ENCODE measurements at regions of chr2 and their contacts with region 1.

Region 1: GRCh38 chr2:144332356-144333142 is 187.4 kb downstream of the ZEB2 start:
- DNase-seq: peak in 8 of 9 experiments; percentile 71 to 95 (median 86)
- ATAC-seq: peak; percentile 88
- H3K4me3 ChIP-seq: peak overlapping the region; percentile 65 to 76
- H3K4me3 Mint-ChIP-seq: peak overlapping the region; percentile 95
- H3K27ac ChIP-seq: peak overlapping the region; percentile 49 to 76
- H3K27ac Mint-ChIP-seq: peak overlapping the region; percentile 95
- H3K4me1 ChIP-seq: peaks cover 15% of the 10 kb centered on the region
- H3K4me1 Mint-ChIP-seq: peaks cover 38% of the 10 kb centered on the region
- H3K27me3 ChIP-seq: no peaks in the 10 kb centered on the region
- H3K27me3 Mint-ChIP-seq: no peaks in the 10 kb centered on the region
- CTCF ChIP-seq: no peak

Region 2: GRCh38 chr2:144183727-144184126 is 148.8 kb before region 1 on chr2:
- CTCF ChIA-PET with region 1: no interaction called
- POLR2A ChIA-PET with region 1: interaction called, 3 read pairs
- intact Hi-C with region 1: loop called in 1 of 2 experiments (anchors 5 kb)
- DNase-seq: peak; percentile 37 to 96 (median 71)
- ATAC-seq: peak; percentile 98
- H3K4me3 ChIP-seq: peak overlapping the region in 1 of 2 experiments; percentile 31
- H3K4me3 Mint-ChIP-seq: peak overlapping the region; percentile 76
- H3K27ac ChIP-seq: peak overlapping the region in 1 of 2 experiments; percentile 38
- H3K27ac Mint-ChIP-seq: peak overlapping the region; percentile 71
- H3K4me1 ChIP-seq: peaks cover 12% of the 10 kb centered on the region
- H3K4me1 Mint-ChIP-seq: peaks cover 30% of the 10 kb centered on the region
- H3K27me3 ChIP-seq: no peaks in the 10 kb centered on the region
- H3K27me3 Mint-ChIP-seq: no peaks in the 10 kb centered on the region
- CTCF ChIP-seq: no peak

Region 3: GRCh38 chr2:144275340-144275739 is 57.2 kb before region 1 on chr2:
- CTCF ChIA-PET with region 1: no interaction called
- POLR2A ChIA-PET with region 1: interaction called, 3 read pairs
- intact Hi-C with region 1: loop called in 1 of 2 experiments (anchors 5 kb)
- DNase-seq: no peak
- ATAC-seq: no peak
- H3K4me3 ChIP-seq: no peak overlapping the region
- H3K4me3 Mint-ChIP-seq: no peak overlapping the region
- H3K27ac ChIP-seq: no peak overlapping the region
- H3K27ac Mint-ChIP-seq: no peak overlapping the region
- H3K4me1 ChIP-seq: no peaks in the 10 kb centered on the region
- H3K4me1 Mint-ChIP-seq: peaks cover 32% of the 10 kb centered on the region
- H3K27me3 ChIP-seq: no peaks in the 10 kb centered on the region
- H3K27me3 Mint-ChIP-seq: no peaks in the 10 kb centered on the region
- CTCF ChIP-seq: no peak

Region 4: DNA sequence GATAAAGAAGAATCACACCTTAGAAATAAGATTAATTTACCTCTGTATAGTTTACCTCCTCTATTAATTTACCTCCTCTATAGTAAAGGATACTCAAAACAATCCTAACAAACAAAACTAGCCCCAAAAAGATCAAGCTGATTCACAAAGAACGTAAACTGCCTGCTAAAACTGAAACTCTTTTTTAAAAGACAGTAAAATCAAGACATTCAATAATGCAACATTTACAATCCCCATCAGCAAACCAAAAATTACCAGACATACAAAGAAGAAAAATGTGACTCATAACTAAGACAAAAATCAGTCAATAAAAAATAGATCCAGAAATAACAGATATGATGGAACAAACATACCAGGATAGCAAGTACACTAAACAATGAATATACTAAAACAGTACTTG is 28.3 kb before region 1 on chr2:
- CTCF ChIA-PET with region 1: no interaction called
- POLR2A ChIA-PET with region 1: no interaction called
- intact Hi-C with region 1: no loop called
- DNase-seq: no peak
- ATAC-seq: no peak
- H3K4me3 ChIP-seq: no peak overlapping the region
- H3K4me3 Mint-ChIP-seq: no peak overlapping the region
- H3K27ac ChIP-seq: no peak overlapping the region
- H3K27ac Mint-ChIP-seq: no peak overlapping the region
- H3K4me1 ChIP-seq: no peaks in the 10 kb centered on the region
- H3K4me1 Mint-ChIP-seq: peaks cover 16% of the 10 kb centered on the region
- H3K27me3 ChIP-seq: no peaks in the 10 kb centered on the region
- H3K27me3 Mint-ChIP-seq: no peaks in the 10 kb centered on the region
- CTCF ChIP-seq: no peak

Region 5: DNA sequence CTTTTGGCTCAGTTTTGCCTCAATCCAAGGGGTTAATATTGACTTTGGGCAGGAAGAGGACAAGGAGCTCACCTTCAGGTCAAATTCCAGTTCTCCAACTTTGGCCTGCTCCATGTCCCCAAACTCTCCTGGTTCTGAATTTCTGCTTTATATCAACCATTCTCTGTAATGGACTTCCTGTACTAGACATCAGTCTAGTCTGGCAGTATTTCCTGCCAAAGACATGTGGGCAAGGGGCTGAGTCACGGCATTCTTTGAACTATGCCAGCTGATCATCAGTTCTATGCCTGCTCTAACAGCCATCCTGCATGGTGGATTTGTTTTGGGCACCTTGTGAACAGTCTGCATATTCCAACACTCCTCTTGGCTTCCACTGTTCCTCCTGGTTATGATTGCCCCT is 12.1 kb before region 1 on chr2:
- CTCF ChIA-PET with region 1: interaction called, 4 read pairs
- POLR2A ChIA-PET with region 1: interaction called, 10 read pairs
- intact Hi-C with region 1: loop called in 1 of 2 experiments (anchors 1 kb)
- DNase-seq: peak in 8 of 9 experiments; percentile 41 to 87 (median 72)
- ATAC-seq: peak; percentile 53
- H3K4me3 ChIP-seq: no peak overlapping the region
- H3K4me3 Mint-ChIP-seq: peak overlapping the region; percentile 27
- H3K27ac ChIP-seq: peak overlapping the region in 1 of 2 experiments; percentile 64
- H3K27ac Mint-ChIP-seq: peak overlapping the region; percentile 86
- H3K4me1 ChIP-seq: peaks cover 29% of the 10 kb centered on the region
- H3K4me1 Mint-ChIP-seq: peaks cover 55% of the 10 kb centered on the region
- H3K27me3 ChIP-seq: no peaks in the 10 kb centered on the region
- H3K27me3 Mint-ChIP-seq: no peaks in the 10 kb centered on the region
- CTCF ChIP-seq: no peak

Region 6: GRCh38 chr2:144382849-144383248 is 50.3 kb after region 1 on chr2:
- CTCF ChIA-PET with region 1: no interaction called
- POLR2A ChIA-PET with region 1: no interaction called
- intact Hi-C with region 1: loop called (anchors 2 to 5 kb)
- DNase-seq: peak in 4 of 9 experiments; percentile 26 to 89 (median 62)
- ATAC-seq: peak; percentile 93
- H3K4me3 ChIP-seq: no peak overlapping the region
- H3K4me3 Mint-ChIP-seq: peak overlapping the region; percentile 3
- H3K27ac ChIP-seq: no peak overlapping the region
- H3K27ac Mint-ChIP-seq: peak overlapping the region; percentile 15
- H3K4me1 ChIP-seq: peaks cover 20% of the 10 kb centered on the region
- H3K4me1 Mint-ChIP-seq: peaks cover 29% of the 10 kb centered on the region
- H3K27me3 ChIP-seq: no peaks in the 10 kb centered on the region
- H3K27me3 Mint-ChIP-seq: no peaks in the 10 kb centered on the region
- CTCF ChIP-seq: no peak

Region 7: DNA sequence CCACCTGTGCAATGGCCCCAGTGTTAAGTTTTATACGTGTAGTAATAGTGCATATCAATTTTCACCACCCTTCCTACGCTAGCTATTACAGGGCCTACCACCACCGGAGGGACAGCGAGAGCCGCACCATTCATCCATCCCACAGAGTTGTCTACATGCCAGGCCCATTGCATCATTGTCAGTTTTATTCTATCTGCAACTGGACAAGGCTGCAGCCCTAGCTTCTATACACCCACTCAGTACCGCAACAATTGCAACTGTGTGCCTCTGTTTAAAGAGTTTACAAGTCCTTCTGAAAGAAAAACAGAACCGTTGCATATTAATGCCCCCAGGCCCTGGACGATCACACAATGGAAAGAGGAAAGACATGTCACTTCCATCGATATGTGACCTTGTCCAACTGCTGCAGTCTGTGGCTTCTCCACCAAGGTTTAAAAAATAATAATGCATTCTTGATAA is 128.8 kb after region 1 on chr2:
- CTCF ChIA-PET with region 1: no interaction called
- POLR2A ChIA-PET with region 1: no interaction called
- intact Hi-C with region 1: loop called in 1 of 2 experiments (anchors 5 kb)
- DNase-seq: no peak
- ATAC-seq: no peak
- H3K4me3 ChIP-seq: no peak overlapping the region
- H3K4me3 Mint-ChIP-seq: no peak overlapping the region
- H3K27ac ChIP-seq: peak overlapping the region; percentile 56 to 98
- H3K27ac Mint-ChIP-seq: no peak overlapping the region
- H3K4me1 ChIP-seq: no peaks in the 10 kb centered on the region
- H3K4me1 Mint-ChIP-seq: peaks cover 12% of the 10 kb centered on the region
- H3K27me3 ChIP-seq: no peaks in the 10 kb centered on the region
- H3K27me3 Mint-ChIP-seq: no peaks in the 10 kb centered on the region
- CTCF ChIP-seq: no peak

Region 8: GRCh38 chr2:144516981-144517865 is 184.7 kb after region 1 on chr2:
- CTCF ChIA-PET with region 1: no interaction called
- POLR2A ChIA-PET with region 1: no interaction called
- intact Hi-C with region 1: loop called (anchors 2 kb)
- DNase-seq: peak in 7 of 9 experiments; percentile 31 to 88 (median 66)
- ATAC-seq: peak; percentile 67
- H3K4me3 ChIP-seq: peak overlapping the region; percentile 66 to 69
- H3K4me3 Mint-ChIP-seq: no peak overlapping the region
- H3K27ac ChIP-seq: peak overlapping the region; percentile 65 to 92
- H3K27ac Mint-ChIP-seq: peak overlapping the region; percentile 94
- H3K4me1 ChIP-seq: peaks cover 13% of the 10 kb centered on the region
- H3K4me1 Mint-ChIP-seq: peaks cover 21% of the 10 kb centered on the region
- H3K27me3 ChIP-seq: peaks cover 0 to 30% of the 10 kb centered on the region in 2 experiments
- H3K27me3 Mint-ChIP-seq: peaks cover 39% of the 10 kb centered on the region
- CTCF ChIP-seq: no peak

Measured in CD8-positive, alpha-beta T cell (primary cell).